Psoas muscle (tissue), 8 donors: ENCODE measurements at regions of chr20 and their contacts with region 1.

Region 1: GRCh38 chr20:52809003-52809402 is 163.2 kb upstream of the TSHZ2 start:
- DNase-seq: no peak
- ATAC-seq: no peak
- H3K4me3 ChIP-seq: no peak overlapping the region
- H3K27ac ChIP-seq: no peak overlapping the region
- H3K4me1 ChIP-seq: no peaks in the 10 kb centered on the region
- H3K27me3 ChIP-seq: peaks cover 0 to 5% (median 0%) of the 10 kb centered on the region in 3 donors
- CTCF ChIP-seq: no peak

Region 2: DNA sequence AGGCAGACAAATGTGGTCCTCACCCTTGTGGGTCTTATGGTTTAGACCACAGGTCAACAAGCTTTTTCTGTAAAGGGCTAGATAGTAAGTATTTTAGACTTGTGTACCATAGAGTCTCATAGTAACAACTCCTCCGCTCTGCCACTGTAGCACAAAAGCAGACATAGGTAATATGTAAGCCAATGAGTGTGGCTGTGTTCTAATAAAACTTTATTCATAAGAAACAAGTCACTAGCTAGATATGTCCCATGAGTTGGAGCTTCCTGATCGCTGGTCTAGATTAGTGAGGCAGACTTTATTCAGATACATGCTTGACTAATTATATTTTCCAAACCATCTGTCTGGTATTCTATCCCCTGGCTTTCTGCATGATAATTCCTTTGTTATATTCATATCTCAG is 33.2 kb before region 1 on chr20:
- intact Hi-C with region 1: loop called in 1 of 2 experiments (anchors 2 kb)
- DNase-seq: no peak
- ATAC-seq: no peak
- H3K4me3 ChIP-seq: no peak overlapping the region
- H3K27ac ChIP-seq: no peak overlapping the region
- H3K4me1 ChIP-seq: no peaks in the 10 kb centered on the region
- H3K27me3 ChIP-seq: peaks cover 0 to 2% (median 0%) of the 10 kb centered on the region in 3 donors
- CTCF ChIP-seq: no peak